Thyroid gland (tissue), 4 donors: ENCODE measurements at regions of chr12 and their contacts with region 1.

Region 1: DNA sequence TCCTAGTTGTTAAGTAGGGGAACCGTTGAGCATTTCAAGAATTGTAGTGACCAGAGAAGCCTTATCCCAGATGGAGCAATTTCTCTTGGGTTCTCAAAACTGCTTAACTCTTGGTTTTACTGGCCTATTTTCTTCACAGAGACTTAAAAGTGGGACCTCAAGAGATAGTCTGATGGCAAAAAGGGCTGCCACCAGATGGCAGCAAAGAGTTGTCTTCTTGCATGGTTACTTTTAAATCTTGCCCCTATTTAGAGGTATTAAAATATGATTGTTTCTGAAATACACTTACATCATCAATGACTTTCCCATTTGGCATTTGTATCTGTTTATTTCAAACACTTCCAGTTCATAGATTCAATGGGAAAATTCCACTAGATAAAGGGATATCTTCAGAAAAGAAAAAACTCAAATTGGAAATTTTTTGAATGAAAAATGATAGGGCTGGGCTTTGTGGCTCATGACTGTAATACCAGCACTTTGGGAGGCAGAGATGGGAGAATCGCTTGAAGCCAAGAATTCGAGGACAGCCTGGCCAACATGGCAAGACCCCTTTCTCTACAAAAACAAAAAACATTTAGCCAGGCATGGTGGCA is 69.9 kb upstream of the CNTN1 start:
- DNase-seq: peak; percentile 60 to 66
- H3K4me3 ChIP-seq: no peak overlapping the region
- H3K27ac ChIP-seq: no peak overlapping the region
- H3K4me1 ChIP-seq: no peaks in the 10 kb centered on the region
- H3K27me3 ChIP-seq: no peaks in the 10 kb centered on the region
- CTCF ChIP-seq: peak; percentile 15 to 75 (median 56)
- POLR2A ChIP-seq: no peak

Region 2: GRCh38 chr12:40451661-40452060 is 170.7 kb before region 1 on chr12:
- intact Hi-C with region 1: no loop called
- DNase-seq: no peak
- H3K4me3 ChIP-seq: no peak overlapping the region
- H3K27ac ChIP-seq: no peak overlapping the region
- H3K4me1 ChIP-seq: no peaks in the 10 kb centered on the region
- H3K27me3 ChIP-seq: no peaks in the 10 kb centered on the region
- CTCF ChIP-seq: no peak
- POLR2A ChIP-seq: no peak

Region 3: GRCh38 chr12:40921563-40922163 is 299.3 kb after region 1 on chr12:
- intact Hi-C with region 1: loop called (anchors 5 kb)
- DNase-seq: no peak
- H3K4me3 ChIP-seq: no peak overlapping the region
- H3K27ac ChIP-seq: no peak overlapping the region
- H3K4me1 ChIP-seq: no peaks in the 10 kb centered on the region
- H3K27me3 ChIP-seq: no peaks in the 10 kb centered on the region
- CTCF ChIP-seq: peak in 5 of 6 experiments; percentile 19 to 66 (median 59)
- POLR2A ChIP-seq: no peak